AG04450 (cell line): ENCODE measurements at regions of chr16 and their contacts with region 1.

Region 1: DNA sequence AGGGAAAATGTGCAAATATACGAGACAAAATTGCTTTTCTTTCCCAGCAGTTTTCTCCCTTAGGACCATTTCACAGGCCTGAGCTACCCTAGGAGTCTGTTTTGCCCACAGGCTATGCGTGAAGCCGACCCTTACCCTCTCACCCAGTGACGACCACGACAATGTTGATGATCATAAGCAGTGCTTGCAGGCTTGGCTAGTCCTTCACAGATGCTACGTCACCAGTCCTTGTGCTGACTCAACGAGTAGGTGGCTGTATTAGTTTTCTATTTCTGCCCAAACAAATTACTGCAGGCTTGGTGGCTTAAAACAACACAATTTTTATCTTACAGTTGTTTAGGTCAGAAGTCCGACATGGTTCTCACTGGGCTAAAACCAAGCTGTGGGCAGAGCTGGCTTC is 574.6 kb upstream of the HSBP1 start:
- DNase-seq: no peak
- H3K4me3 ChIP-seq: no peak overlapping the region
- H3K27ac ChIP-seq: no peak overlapping the region
- H3K27me3 ChIP-seq: no peaks in the 10 kb centered on the region
- CTCF ChIP-seq: no peak

Region 2: DNA sequence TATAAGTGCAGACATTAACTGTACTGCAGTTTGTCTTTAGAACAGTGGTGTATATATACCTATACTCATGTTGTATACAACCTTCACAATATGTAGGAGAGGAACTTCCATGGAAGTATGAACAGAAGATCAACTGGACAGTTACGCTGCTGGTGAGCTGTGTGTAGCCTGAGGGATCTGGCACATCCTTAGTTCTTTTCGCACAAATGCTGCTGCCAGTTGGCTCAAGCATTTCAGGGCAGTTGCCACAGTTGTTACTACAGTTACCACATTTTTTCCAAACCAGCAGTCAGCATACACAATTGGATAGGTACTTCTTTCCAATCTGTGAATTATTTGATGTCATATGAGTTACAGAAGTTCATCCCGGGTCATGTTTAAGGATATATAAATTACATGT is 35.0 kb after region 1 on chr16:
- CTCF ChIA-PET with region 1: no interaction called
- POLR2A ChIA-PET with region 1: no interaction called
- DNase-seq: no peak
- H3K4me3 ChIP-seq: no peak overlapping the region
- H3K27ac ChIP-seq: no peak overlapping the region
- H3K27me3 ChIP-seq: no peaks in the 10 kb centered on the region
- CTCF ChIP-seq: no peak

Region 3: GRCh38 chr16:83344014-83344413 is 110.9 kb after region 1 on chr16:
- CTCF ChIA-PET with region 1: interaction called, 13 read pairs
- POLR2A ChIA-PET with region 1: no interaction called
- DNase-seq: peak; percentile 36
- H3K4me3 ChIP-seq: no peak overlapping the region
- H3K27ac ChIP-seq: no peak overlapping the region
- H3K27me3 ChIP-seq: no peaks in the 10 kb centered on the region
- CTCF ChIP-seq: no peak

Region 4: DNA sequence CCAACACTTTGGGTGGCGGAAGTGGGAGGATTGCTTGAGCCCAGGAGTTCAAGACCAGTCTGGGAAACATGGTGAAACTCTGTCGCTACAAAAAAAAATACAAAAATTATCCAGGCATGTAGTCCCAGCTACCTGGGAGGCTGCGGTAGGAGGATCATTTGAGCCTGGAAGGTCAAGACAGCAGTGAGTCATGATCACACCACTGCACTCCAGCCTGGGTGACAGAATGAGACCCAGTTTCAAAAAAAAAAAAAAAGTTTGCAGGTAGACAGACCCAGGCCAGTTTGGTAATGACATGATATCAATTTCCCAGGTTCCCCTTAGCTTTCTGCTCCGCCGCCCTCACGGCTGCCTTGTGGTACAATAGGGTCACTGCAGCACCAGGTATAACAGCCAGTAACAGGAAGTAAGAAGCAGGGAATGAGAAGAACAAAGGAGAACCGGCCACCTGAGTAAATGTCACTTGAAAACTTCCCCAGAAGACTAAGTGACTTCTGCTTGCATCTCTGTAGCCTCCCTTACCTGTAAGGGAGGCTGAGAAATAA is 373.4 kb after region 1 on chr16:
- CTCF ChIA-PET with region 1: no interaction called
- POLR2A ChIA-PET with region 1: no interaction called
- DNase-seq: no peak
- H3K4me3 ChIP-seq: no peak overlapping the region
- H3K27ac ChIP-seq: no peak overlapping the region
- H3K27me3 ChIP-seq: no peaks in the 10 kb centered on the region
- CTCF ChIP-seq: no peak